Heart left ventricle (tissue), 16 donors: ENCODE measurements at regions of chr11 and their contacts with region 1.

Region 1: GRCh38 chr11:84909740-84910139 is 717.4 kb downstream of the DLG2 start:
- DNase-seq: no peak
- ATAC-seq: no peak
- H3K4me3 ChIP-seq: no peak overlapping the region
- H3K27ac ChIP-seq: no peak overlapping the region
- H3K4me1 ChIP-seq: peaks cover 0 to 9% (median 0%) of the 10 kb centered on the region in 12 donors
- H3K27me3 ChIP-seq: no peaks in the 10 kb centered on the region
- CTCF ChIP-seq: no peak
- POLR2A ChIP-seq: no peak

Region 2: DNA sequence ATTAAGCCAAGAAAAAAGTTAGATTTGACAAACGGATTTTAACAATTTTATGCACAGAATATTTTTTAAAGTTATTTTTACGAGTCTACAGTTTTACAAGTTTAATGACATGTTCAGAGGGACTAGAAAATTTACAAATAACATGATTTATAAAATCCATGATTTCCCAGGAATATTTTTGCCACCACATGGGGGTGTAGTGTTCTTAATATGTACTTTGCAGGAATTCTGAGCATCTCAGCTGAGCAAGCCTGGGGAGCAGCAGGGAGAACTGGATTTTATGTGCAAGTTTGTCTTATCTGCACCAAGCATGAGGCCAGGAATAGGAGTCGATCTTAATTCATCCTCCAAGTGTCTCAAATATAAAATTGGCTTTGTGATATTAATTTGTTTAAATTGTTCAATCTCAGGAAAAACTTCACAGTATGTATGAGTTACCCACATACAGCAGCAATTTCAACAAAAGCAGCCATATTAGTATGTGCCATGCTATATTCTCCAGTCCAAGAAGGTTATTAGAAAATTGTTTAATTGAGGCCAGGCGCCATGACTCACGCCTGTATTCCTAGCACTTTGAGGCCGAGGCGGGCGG is 108.9 kb before region 1 on chr11:
- intact Hi-C with region 1: loop called in 1 of 10 experiments (anchors 10 kb)
- DNase-seq: no peak
- ATAC-seq: no peak
- H3K4me3 ChIP-seq: no peak overlapping the region
- H3K27ac ChIP-seq: no peak overlapping the region
- H3K4me1 ChIP-seq: no peaks in the 10 kb centered on the region
- H3K27me3 ChIP-seq: no peaks in the 10 kb centered on the region
- CTCF ChIP-seq: peak in 7 of 12 donors; percentile 7 to 38 (median 30)
- POLR2A ChIP-seq: no peak

Region 3: GRCh38 chr11:84993386-84993785 is 83.6 kb after region 1 on chr11:
- intact Hi-C with region 1: no loop called
- DNase-seq: no peak
- ATAC-seq: no peak
- H3K4me3 ChIP-seq: no peak overlapping the region
- H3K27ac ChIP-seq: no peak overlapping the region
- H3K4me1 ChIP-seq: no peaks in the 10 kb centered on the region
- H3K27me3 ChIP-seq: no peaks in the 10 kb centered on the region
- CTCF ChIP-seq: no peak
- POLR2A ChIP-seq: no peak